ENCODE measurements at regions of chr3 and their contacts with region 1.

Region 1: GRCh38 chr3:133475245-133476010 is 75.6 kb downstream of the BFSP2 start:
- DNase-seq: peak; percentile 46
- H3K4me3 Mint-ChIP-seq: no peak overlapping the region
- H3K27ac Mint-ChIP-seq: peak overlapping the region; percentile 59
- H3K4me1 Mint-ChIP-seq: peaks cover 48% of the 10 kb centered on the region
- H3K27me3 Mint-ChIP-seq: no peaks in the 10 kb centered on the region

Region 2: DNA sequence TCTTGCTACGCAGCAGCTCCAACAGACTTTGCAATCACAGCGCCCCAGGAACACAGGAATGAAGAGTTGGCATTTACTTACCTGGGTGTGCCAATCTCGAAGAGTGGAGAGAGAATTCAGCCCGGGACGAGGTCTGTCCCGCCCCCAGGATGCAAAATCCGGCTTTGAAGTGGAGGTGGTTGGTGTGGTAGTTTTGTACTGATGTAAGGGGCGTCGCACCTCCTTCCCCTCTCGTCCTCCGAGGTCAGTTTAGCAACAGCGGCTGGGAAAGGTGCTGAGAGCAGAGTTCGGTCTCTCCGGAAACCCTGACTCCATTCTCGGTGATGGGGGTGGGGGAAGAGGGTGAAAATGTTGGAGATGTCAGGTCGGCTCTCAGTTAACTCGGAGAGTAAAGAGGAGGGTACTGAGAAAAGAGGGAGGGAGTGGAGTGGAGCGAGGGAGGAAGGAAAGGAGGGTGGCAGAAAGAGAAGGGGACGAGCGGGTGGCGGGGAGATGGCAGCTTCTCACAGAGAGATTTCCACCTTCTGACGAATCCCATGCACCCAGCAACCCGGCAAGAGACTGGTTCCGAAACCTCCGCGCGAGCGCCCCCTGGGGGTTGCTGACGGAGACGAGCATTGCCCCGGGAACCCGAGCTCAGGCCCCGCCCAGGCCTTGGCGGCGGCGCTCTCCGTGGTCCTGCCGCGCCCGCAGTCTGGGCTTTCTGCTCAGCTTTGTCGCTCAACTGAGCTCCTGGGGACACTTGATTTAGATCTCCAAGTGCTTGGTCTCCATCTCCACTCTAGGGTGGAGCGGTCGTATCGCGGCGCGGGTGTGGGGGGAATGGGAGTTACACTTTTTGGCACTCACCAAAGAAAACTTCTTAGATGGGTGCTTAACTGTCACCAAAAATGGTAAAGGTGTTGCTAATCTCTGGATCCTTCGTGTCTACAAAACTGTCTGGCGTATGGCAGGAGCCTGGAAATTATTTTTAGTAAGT is 1440.7 kb before region 1 on chr3 and contains the start of gene CPNE4:
- CTCF ChIA-PET with region 1: no interaction called
- intact Hi-C with region 1: no loop called
- DNase-seq: peak; percentile 86
- H3K4me3 Mint-ChIP-seq: no peak within 1 kb of the TSS
- H3K27ac Mint-ChIP-seq: no peak within 1 kb of the TSS
- H3K4me1 Mint-ChIP-seq: peaks cover 8% of the 10 kb centered on the region
- H3K27me3 Mint-ChIP-seq: peaks cover 76% of the 10 kb centered on the region
- total RNA-seq, gene CPNE4: not detected

Region 3: GRCh38 chr3:133181392-133182150 is 293.9 kb before region 1 on chr3:
- CTCF ChIA-PET with region 1: no interaction called
- intact Hi-C with region 1: no loop called
- DNase-seq: no peak
- H3K4me3 Mint-ChIP-seq: no peak overlapping the region
- H3K27ac Mint-ChIP-seq: no peak overlapping the region
- H3K4me1 Mint-ChIP-seq: no peaks in the 10 kb centered on the region
- H3K27me3 Mint-ChIP-seq: no peaks in the 10 kb centered on the region

Region 4: GRCh38 chr3:133441867-133442270 is 33.6 kb before region 1 on chr3:
- CTCF ChIA-PET with region 1: interaction called, 3 read pairs
- intact Hi-C with region 1: loop called (anchors 1 kb)
- DNase-seq: peak; percentile 47
- H3K4me3 Mint-ChIP-seq: peak overlapping the region; percentile 60
- H3K27ac Mint-ChIP-seq: peak overlapping the region; percentile 76
- H3K4me1 Mint-ChIP-seq: peaks cover 30% of the 10 kb centered on the region
- H3K27me3 Mint-ChIP-seq: no peaks in the 10 kb centered on the region

Region 5: DNA sequence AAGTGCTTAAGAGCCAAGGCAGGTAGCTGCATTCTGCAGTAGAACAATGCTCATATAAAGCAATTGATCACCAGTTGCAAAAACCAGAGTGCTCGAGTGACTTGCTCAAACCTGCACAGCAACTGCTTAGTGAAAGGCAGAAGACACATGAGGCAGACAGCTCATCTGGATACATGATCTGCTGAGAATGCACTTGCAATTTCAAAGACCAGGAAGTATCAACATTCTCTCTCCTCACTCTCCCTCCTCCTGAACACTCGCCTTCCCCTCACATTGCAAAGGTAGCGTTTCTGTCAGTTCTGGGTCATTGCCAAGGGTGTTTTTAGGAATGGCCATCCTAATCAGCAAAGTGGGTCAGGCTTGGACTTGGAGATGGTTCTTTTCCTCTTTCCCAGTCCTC is 14.6 kb before region 1 on chr3:
- CTCF ChIA-PET with region 1: interaction called, 4 read pairs
- intact Hi-C with region 1: loop called (anchors 2 kb)
- DNase-seq: peak; percentile 44
- H3K4me3 Mint-ChIP-seq: no peak overlapping the region
- H3K27ac Mint-ChIP-seq: no peak overlapping the region
- H3K4me1 Mint-ChIP-seq: peaks cover 28% of the 10 kb centered on the region
- H3K27me3 Mint-ChIP-seq: no peaks in the 10 kb centered on the region

Region 6: GRCh38 chr3:133487920-133488540 is 12.6 kb after region 1 on chr3:
- CTCF ChIA-PET with region 1: interaction called, 19 read pairs
- intact Hi-C with region 1: loop called (anchors 1 kb)
- DNase-seq: peak; percentile 72
- H3K4me3 Mint-ChIP-seq: no peak overlapping the region
- H3K27ac Mint-ChIP-seq: no peak overlapping the region
- H3K4me1 Mint-ChIP-seq: peaks cover 49% of the 10 kb centered on the region
- H3K27me3 Mint-ChIP-seq: no peaks in the 10 kb centered on the region

Region 7: DNA sequence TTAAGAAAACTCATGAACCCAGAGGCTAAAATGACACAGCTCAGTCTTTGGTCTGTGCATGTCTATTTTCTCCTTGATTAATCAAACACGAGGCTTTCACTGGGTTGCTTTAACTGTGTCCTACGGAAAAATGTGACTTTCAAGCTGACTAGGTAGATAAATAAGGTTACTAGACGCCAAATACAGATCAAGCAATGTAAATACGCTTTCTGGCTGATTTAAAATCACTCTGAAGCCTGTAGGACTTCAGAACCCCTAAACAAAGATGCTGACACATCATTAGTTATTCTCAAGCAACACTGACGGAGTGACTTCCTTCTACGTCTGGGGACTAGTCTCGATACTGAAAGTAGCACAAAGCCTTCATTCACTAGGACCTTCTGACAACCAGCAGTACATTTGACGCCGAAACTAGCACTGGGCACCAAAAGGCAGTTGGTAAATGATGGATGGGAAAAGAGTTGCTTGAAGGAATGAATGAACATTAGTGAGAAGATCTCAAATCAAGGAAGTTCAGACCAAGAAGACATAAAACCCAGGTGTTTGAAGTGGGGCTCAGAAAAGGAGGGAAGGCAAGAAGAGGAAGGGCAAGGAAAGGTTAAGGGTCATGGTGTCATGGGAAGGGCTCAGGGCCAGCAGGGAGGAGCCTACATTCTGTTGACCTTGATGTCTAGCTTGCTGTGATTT is 30.9 kb after region 1 on chr3:
- CTCF ChIA-PET with region 1: no interaction called
- intact Hi-C with region 1: loop called (anchors 1 kb)
- DNase-seq: peak; percentile 59
- H3K4me3 Mint-ChIP-seq: peak overlapping the region; percentile 54
- H3K27ac Mint-ChIP-seq: peak overlapping the region; percentile 67
- H3K4me1 Mint-ChIP-seq: peaks cover 11% of the 10 kb centered on the region
- H3K27me3 Mint-ChIP-seq: no peaks in the 10 kb centered on the region

Region 8: DNA sequence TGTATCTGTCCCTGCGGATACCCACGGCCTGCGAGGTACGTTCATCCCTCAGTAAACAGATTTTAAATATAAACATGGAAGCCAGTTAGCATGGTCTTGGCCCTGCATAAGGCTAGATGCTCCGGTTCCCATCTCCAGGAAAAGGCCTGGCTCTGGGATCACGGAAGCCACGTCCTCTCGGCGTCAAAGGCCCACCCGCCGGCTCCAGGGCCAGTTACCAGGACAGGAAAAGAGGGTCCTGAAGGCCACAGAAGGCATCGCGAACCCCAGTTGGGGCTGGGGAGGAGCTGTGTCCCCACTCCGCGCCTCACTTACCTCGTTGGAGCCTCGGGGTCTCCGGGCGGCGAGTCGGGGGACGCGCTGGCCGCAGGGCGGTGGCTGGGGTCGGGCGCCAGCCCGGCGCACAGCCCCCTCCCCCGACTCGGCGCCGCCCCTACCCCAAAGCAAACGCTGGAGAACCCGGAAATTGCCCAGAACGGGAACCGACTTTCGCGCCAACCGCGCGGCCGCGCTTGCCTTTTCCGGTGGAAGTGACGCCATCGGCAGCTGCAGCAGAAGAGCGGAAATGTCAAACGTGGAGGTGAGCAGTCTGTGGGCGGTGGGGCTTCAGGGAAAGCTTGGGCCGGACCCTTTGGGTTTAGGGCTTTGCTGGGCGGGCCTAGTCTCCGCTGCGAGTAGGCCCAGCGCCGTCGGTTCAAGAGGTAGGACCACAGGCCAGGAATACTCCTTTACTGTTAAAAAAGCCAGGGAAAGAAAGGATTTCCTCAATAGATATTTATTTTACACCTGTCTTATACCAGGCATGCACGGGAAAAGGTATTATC is 186.2 kb after region 1 on chr3 and contains the start of gene TOPBP1:
- CTCF ChIA-PET with region 1: no interaction called
- intact Hi-C with region 1: loop called (anchors 1 kb)
- DNase-seq: peak; percentile 94
- H3K4me3 Mint-ChIP-seq: peak within 1 kb of the TSS; percentile 98
- H3K27ac Mint-ChIP-seq: peak within 1 kb of the TSS; percentile 98
- H3K4me1 Mint-ChIP-seq: peaks cover 28% of the 10 kb centered on the region
- H3K27me3 Mint-ChIP-seq: no peaks in the 10 kb centered on the region
- total RNA-seq, gene TOPBP1: 65.4 to 65.8 TPM

Measured in activated naive CD4-positive, alpha-beta T cell treated with anti-CD3 and anti-CD28 coated beads for 36 hours (primary cell).